GM12878 (cell line): ENCODE measurements at regions of chr11 and their contacts with region 1.

Region 1: DNA sequence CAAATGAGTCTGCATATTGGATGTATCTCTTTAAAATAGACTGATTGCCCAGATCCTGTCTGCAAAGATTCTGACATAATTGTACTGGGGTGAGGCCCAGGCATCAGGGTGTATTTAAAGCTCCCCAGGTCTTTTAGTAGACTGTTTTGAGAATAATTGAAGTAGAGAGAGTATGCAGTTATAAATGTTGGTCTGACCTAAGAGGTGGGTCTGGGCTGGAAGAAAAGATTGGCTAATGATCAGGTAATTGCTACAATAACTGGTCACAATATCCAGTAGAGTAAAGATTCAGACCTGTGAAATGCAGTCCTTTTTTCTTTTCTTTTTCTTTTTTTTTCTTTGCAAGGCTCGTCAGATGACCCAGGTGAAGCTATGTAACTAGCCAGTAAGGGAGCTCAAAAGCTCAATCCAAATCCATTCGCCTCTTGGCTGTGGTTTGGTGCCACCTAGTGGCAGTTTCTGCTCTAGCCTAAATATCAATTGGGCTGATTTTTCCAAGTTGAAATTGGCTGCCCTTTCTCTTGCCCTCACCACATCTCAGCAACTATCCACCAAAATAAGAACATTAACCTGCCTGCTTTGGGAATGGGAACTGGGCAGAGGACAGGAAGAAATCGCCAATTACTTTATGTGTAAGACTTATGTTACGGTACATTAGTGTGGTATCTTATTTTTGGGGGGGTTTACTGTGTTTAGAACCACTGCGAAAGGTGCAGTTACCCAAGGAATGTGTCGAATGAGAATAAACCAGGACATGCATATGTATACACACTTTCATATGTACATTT is 45.9 kb downstream of the ZNF143 start:
- DNase-seq: peak; percentile 39
- ATAC-seq: peak; percentile 80
- H3K4me3 ChIP-seq: no peak overlapping the region
- H3K27ac ChIP-seq: no peak overlapping the region
- H3K4me1 ChIP-seq: peaks cover 4% of the 10 kb centered on the region
- H3K27me3 ChIP-seq: no peaks in the 10 kb centered on the region
- CTCF ChIP-seq: peak; percentile 78 to 93 (median 92)
- EP300 ChIP-seq: no peak
- POLR2A ChIP-seq: no peak
- RAD21 ChIP-seq: peak; percentile 97

Region 2: GRCh38 chr11:9137293-9138132 is 369.2 kb before region 1 on chr11:
- CTCF ChIA-PET with region 1: interaction called, 34 read pairs
- POLR2A ChIA-PET with region 1: no interaction called
- RAD21 ChIA-PET with region 1: interaction called, 14 read pairs
- SMC1A ChIA-PET with region 1: interaction called, 4 read pairs
- in situ Hi-C with region 1: no loop called
- intact Hi-C with region 1: no loop called
- DNase-seq: peak; percentile 27
- ATAC-seq: peak; percentile 100
- H3K4me3 ChIP-seq: no peak overlapping the region
- H3K27ac ChIP-seq: no peak overlapping the region
- H3K4me1 ChIP-seq: no peaks in the 10 kb centered on the region
- H3K27me3 ChIP-seq: no peaks in the 10 kb centered on the region
- CTCF ChIP-seq: peak; percentile 91 to 99 (median 97)
- EP300 ChIP-seq: no peak
- POLR2A ChIP-seq: no peak
- RAD21 ChIP-seq: peak; percentile 95

Region 3: GRCh38 chr11:9176550-9176949 is 330.1 kb before region 1 on chr11:
- CTCF ChIA-PET with region 1: interaction called, 19 read pairs
- POLR2A ChIA-PET with region 1: interaction called, 3 read pairs
- RAD21 ChIA-PET with region 1: interaction called, 4 read pairs
- SMC1A ChIA-PET with region 1: interaction called, 3 read pairs
- in situ Hi-C with region 1: no loop called
- intact Hi-C with region 1: no loop called
- DNase-seq: no peak
- ATAC-seq: no peak
- H3K4me3 ChIP-seq: no peak overlapping the region
- H3K27ac ChIP-seq: no peak overlapping the region
- H3K4me1 ChIP-seq: no peaks in the 10 kb centered on the region
- H3K27me3 ChIP-seq: no peaks in the 10 kb centered on the region
- CTCF ChIP-seq: no peak
- EP300 ChIP-seq: no peak
- POLR2A ChIP-seq: no peak
- RAD21 ChIP-seq: no peak

Region 4: DNA sequence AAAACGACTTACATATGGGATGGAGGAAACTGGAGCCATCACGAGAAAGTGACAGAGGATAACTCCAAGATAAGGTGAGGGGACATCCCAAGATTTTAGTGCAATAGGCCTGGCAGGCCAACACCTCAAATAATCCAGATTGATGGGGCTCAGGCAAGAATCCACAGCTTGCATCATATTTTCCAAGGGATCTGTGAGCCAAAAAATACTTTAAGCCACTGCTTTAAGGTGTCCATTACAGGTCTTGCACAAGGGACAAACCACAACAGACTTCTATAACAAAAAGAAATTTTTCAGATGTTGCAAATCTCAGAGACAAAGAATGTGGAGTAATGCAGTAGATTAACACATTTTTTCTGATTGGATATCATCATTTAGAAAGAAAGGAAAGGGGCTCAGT is 287.1 kb before region 1 on chr11:
- CTCF ChIA-PET with region 1: no interaction called
- POLR2A ChIA-PET with region 1: no interaction called
- RAD21 ChIA-PET with region 1: no interaction called
- SMC1A ChIA-PET with region 1: no interaction called
- in situ Hi-C with region 1: no loop called
- intact Hi-C with region 1: no loop called
- DNase-seq: no peak
- ATAC-seq: no peak
- H3K4me3 ChIP-seq: no peak overlapping the region
- H3K27ac ChIP-seq: no peak overlapping the region
- H3K4me1 ChIP-seq: peaks cover 15% of the 10 kb centered on the region
- H3K27me3 ChIP-seq: no peaks in the 10 kb centered on the region
- CTCF ChIP-seq: no peak
- EP300 ChIP-seq: no peak
- POLR2A ChIP-seq: no peak
- RAD21 ChIP-seq: no peak

Region 5: GRCh38 chr11:9384535-9385303 is 122.0 kb before region 1 on chr11 and contains the start of gene IPO7:
- CTCF ChIA-PET with region 1: interaction called, 18 read pairs
- POLR2A ChIA-PET with region 1: interaction called, 3 read pairs
- RAD21 ChIA-PET with region 1: interaction called, 14 read pairs
- SMC1A ChIA-PET with region 1: interaction called, 9 read pairs
- in situ Hi-C with region 1: no loop called
- intact Hi-C with region 1: no loop called
- DNase-seq: peak; percentile 60
- ATAC-seq: peak; percentile 97
- H3K4me3 ChIP-seq: peak within 1 kb of the TSS; percentile 97
- H3K27ac ChIP-seq: peak within 1 kb of the TSS; percentile 91
- H3K4me1 ChIP-seq: peaks cover 3% of the 10 kb centered on the region; the same call in 1 of the 2 replicates
- H3K27me3 ChIP-seq: no peaks in the 10 kb centered on the region
- CTCF ChIP-seq: peak in 2 of 3 experiments; percentile 10 to 13; a peak in 1 of 6 replicates
- EP300 ChIP-seq: 0 out of 4 replicates have a peak, but pooled peaks of 1 of the 2 experiments have one; percentile 20
- POLR2A ChIP-seq: peak; percentile 99
- RAD21 ChIP-seq: no peak
- polyA plus RNA-seq, gene IPO7: 9.2 to 9.9 TPM

Region 6: DNA sequence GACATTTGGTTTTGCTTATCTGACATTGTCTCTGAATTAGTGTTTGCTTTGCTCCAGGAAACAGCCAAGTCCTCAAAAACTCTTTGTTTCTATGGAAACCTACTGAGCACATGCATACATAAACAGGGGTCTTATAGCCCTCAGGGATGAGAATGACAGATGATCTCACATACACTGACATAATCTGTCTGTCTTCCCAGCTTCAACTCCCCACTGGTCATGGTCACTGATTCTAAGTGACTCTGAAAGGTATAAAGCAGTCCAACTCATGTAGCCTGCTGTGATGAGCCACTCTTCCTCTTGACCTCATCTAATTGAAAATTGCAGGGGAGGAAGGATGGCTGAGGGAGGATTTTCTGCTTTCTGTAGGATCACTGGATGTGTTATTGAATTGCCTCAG is 33.3 kb before region 1 on chr11:
- CTCF ChIA-PET with region 1: interaction called, 23 read pairs
- POLR2A ChIA-PET with region 1: interaction called, 9 read pairs
- RAD21 ChIA-PET with region 1: interaction called, 5 read pairs
- SMC1A ChIA-PET with region 1: interaction called, 5 read pairs
- in situ Hi-C with region 1: no loop called
- intact Hi-C with region 1: no loop called
- DNase-seq: no peak
- ATAC-seq: no peak
- H3K4me3 ChIP-seq: no peak overlapping the region
- H3K27ac ChIP-seq: no peak overlapping the region
- H3K4me1 ChIP-seq: no peaks in the 10 kb centered on the region
- H3K27me3 ChIP-seq: no peaks in the 10 kb centered on the region
- CTCF ChIP-seq: no peak
- EP300 ChIP-seq: no peak
- POLR2A ChIP-seq: no peak
- RAD21 ChIP-seq: no peak

Region 7: DNA sequence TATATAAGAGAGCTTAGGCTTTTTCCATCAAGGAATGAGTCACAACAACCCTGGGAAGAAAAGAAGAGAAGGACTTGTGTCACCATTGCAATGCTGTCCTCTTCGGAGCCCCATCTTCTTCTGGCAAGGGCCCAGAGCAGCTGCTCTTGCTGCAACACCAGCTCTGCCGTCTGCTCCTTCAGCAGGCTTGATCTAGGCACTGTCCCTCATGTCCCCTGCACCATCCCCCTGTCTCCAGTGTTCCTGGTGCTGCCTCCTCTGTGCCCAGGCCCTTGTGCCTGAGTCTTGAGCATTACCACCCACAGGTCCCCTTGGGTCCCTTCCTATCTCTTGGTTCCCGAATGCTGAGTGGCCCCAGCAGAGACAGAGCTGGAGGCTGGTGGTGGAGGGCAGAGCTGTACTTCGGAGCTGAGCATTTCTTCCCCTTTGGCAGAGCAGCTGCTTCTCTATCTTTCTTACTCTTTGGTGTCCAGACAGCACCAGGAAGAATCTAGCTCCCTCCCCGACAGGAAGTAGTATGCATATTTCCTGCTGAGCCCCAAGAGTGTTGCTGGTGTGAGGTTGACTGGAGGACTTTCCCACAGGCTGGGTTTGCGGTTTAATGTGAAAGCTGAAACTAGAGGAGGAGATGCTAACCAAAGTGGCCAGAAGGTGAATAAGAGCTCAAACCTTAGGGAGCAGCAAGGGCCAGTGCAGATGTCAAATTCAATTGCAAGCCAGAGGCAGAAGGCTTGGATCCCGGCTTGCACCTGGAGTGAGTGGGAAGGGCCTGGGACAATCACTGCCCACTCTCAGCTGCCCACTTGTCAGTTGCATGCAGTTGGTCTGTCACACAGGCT is 94.6 kb after region 1 on chr11:
- CTCF ChIA-PET with region 1: interaction called, 14 read pairs
- POLR2A ChIA-PET with region 1: no interaction called
- RAD21 ChIA-PET with region 1: interaction called, 4 read pairs
- SMC1A ChIA-PET with region 1: interaction called, 10 read pairs
- in situ Hi-C with region 1: no loop called
- intact Hi-C with region 1: no loop called
- DNase-seq: peak; percentile 95
- ATAC-seq: peak; percentile 90
- H3K4me3 ChIP-seq: peak overlapping the region; percentile 64
- H3K27ac ChIP-seq: peak overlapping the region; percentile 87
- H3K4me1 ChIP-seq: peaks cover 40% of the 10 kb centered on the region
- H3K27me3 ChIP-seq: no peaks in the 10 kb centered on the region
- CTCF ChIP-seq: no peak
- EP300 ChIP-seq: peak in 1 of 2 experiments; percentile 60; a peak in 2 of 4 replicates
- POLR2A ChIP-seq: peak; percentile 30; the same call in 1 of the 2 replicates
- RAD21 ChIP-seq: no peak